Breast epithelium (tissue), 4 donors: ENCODE measurements at regions of chr19 and their contacts with region 1.

Region 1: DNA sequence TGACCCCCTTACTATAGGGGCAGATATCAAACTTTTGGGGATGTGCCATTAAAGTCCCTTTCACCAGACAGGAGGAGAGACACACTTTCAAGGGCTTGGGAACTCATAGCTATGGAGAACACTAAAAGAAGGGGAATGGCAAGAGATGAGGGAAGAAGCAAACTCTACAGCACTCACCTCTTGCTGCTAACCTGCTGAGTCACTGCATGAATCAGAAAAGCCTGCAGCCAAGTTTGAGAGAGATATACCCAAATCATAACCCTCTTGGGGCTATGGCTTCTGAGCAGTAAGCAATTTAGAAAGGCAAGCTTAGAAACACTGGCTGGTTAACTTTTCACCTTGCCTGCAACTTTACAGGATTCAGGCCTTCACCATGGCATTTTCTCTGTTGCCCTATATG is 1028.0 kb downstream of the UQCRFS1 start:
- DNase-seq: no peak
- H3K4me3 ChIP-seq: no peak overlapping the region
- H3K27ac ChIP-seq: no peak overlapping the region
- H3K4me1 ChIP-seq: no peaks in the 10 kb centered on the region
- H3K27me3 ChIP-seq: no peaks in the 10 kb centered on the region
- CTCF ChIP-seq: no peak
- POLR2A ChIP-seq: no peak

Region 2: DNA sequence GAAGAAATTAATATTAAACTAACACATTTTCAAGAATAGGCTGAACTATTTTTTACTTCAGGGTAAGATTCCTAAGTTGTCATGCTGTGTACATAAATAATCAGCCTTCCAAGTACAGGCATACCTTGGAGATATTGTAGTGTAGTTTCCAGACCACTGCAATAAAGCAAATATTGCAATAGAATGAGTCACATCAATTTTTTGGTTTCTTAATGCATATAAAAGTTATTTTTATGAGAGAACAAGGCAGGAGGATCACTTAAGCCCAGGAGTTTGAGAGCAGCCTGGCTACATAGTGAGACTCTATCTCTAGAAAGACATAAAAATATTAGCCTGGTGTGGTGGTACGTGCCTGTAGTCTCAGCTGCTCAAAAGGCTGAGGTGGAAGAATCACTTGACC is 516.5 kb after region 1 on chr19:
- intact Hi-C with region 1: loop called (anchors 5 kb)
- DNase-seq: no peak
- H3K4me3 ChIP-seq: no peak overlapping the region
- H3K27ac ChIP-seq: no peak overlapping the region
- H3K4me1 ChIP-seq: no peaks in the 10 kb centered on the region
- H3K27me3 ChIP-seq: no peaks in the 10 kb centered on the region
- CTCF ChIP-seq: no peak
- POLR2A ChIP-seq: no peak